ENCODE measurements at regions of chr19 and their contacts with region 1.

Region 1: GRCh38 chr19:46840136-46840942 is 10.3 kb downstream of the AP2S1 start:
- DNase-seq: peak; percentile 68
- ATAC-seq: peak; percentile 69

Region 2: GRCh38 chr19:46704379-46705076 is 135.8 kb before region 1 on chr19:
- intact Hi-C with region 1: no loop called
- DNase-seq: peak; percentile 87
- ATAC-seq: peak; percentile 78

Region 3: GRCh38 chr19:46759817-46760333 is 80.5 kb before region 1 on chr19:
- intact Hi-C with region 1: loop called (anchors 5 kb)
- DNase-seq: no peak
- ATAC-seq: peak; percentile 16

Region 4: GRCh38 chr19:46898731-46899130 is 58.4 kb after region 1 on chr19:
- intact Hi-C with region 1: no loop called
- DNase-seq: no peak
- ATAC-seq: peak; percentile 54

Measured in left ventricle myocardium superior (tissue), 1 donor.